GM12878 (cell line): ENCODE measurements at regions of chr18 and their contacts with region 1.

Region 1: GRCh38 chr18:50819728-50820378 is at the start of gene MRO:
- DNase-seq: no peak
- ATAC-seq: peak; percentile 99
- H3K4me3 ChIP-seq: peak within 1 kb of the TSS; percentile 56
- H3K27ac ChIP-seq: no peak within 1 kb of the TSS
- H3K4me1 ChIP-seq: peaks cover 6% of the 10 kb centered on the region; the same call in 1 of the 2 replicates
- H3K27me3 ChIP-seq: no peaks in the 10 kb centered on the region
- CTCF ChIP-seq: peak; percentile 95 to 97 (median 96)
- EP300 ChIP-seq: no peak
- POLR2A ChIP-seq: no peak
- RAD21 ChIP-seq: peak; percentile 97
- polyA plus RNA-seq, gene MRO: 0.11 TPM in 1 of 2 experiments, not detected in the other

Region 2: DNA sequence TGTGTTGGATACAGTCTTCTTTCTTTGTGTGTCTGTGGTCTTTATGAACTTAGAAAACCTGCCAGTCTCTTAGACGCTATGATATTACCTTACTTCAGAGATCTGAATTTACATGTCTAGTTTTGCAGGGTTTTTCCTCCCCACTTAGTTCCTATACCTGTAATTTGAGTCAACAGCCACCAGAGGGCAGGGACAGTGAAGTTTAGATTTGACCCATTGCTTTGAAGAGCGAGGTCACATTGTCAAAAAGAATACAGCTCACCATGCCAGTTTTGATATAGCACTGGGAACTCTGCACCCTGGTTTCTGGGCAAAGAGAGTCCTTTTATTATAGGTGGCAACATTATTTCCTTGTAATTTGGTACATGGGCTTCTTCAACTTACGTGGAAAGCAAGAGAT is 157.7 kb before region 1 on chr18:
- CTCF ChIA-PET with region 1: no interaction called
- POLR2A ChIA-PET with region 1: no interaction called
- RAD21 ChIA-PET with region 1: no interaction called
- SMC1A ChIA-PET with region 1: no interaction called
- in situ Hi-C with region 1: no loop called
- intact Hi-C with region 1: no loop called
- DNase-seq: no peak
- ATAC-seq: no peak
- H3K4me3 ChIP-seq: no peak overlapping the region
- H3K27ac ChIP-seq: no peak overlapping the region
- H3K4me1 ChIP-seq: no peaks in the 10 kb centered on the region
- H3K27me3 ChIP-seq: no peaks in the 10 kb centered on the region
- CTCF ChIP-seq: peak; percentile 18 to 50 (median 41); a peak in 3 of 6 replicates
- EP300 ChIP-seq: no peak
- POLR2A ChIP-seq: no peak
- RAD21 ChIP-seq: peak; percentile 56

Region 3: GRCh38 chr18:50866765-50867164 is 46.9 kb after region 1 on chr18:
- CTCF ChIA-PET with region 1: interaction called, 46 read pairs
- POLR2A ChIA-PET with region 1: no interaction called
- RAD21 ChIA-PET with region 1: interaction called, 20 read pairs
- SMC1A ChIA-PET with region 1: interaction called, 24 read pairs
- in situ Hi-C with region 1: no loop called
- intact Hi-C with region 1: loop called (anchors 2 kb)
- DNase-seq: no peak
- ATAC-seq: peak; percentile 73
- H3K4me3 ChIP-seq: no peak overlapping the region
- H3K27ac ChIP-seq: no peak overlapping the region
- H3K4me1 ChIP-seq: peaks cover 12% of the 10 kb centered on the region
- H3K27me3 ChIP-seq: no peaks in the 10 kb centered on the region
- CTCF ChIP-seq: peak; percentile 19 to 42 (median 32); a peak in 5 of 6 replicates
- EP300 ChIP-seq: no peak
- POLR2A ChIP-seq: no peak
- RAD21 ChIP-seq: peak; percentile 78

Region 4: GRCh38 chr18:50878345-50879301 is 58.8 kb after region 1 on chr18 and contains the start of gene ME2:
- CTCF ChIA-PET with region 1: interaction called, 6 read pairs
- POLR2A ChIA-PET with region 1: interaction called, 3 read pairs
- RAD21 ChIA-PET with region 1: interaction called, 3 read pairs
- SMC1A ChIA-PET with region 1: interaction called, 15 read pairs
- in situ Hi-C with region 1: no loop called
- intact Hi-C with region 1: loop called (anchors 1 kb)
- DNase-seq: peak; percentile 59
- ATAC-seq: peak; percentile 95
- H3K4me3 ChIP-seq: peak within 1 kb of the TSS; percentile 79
- H3K27ac ChIP-seq: peak within 1 kb of the TSS; percentile 99
- H3K4me1 ChIP-seq: peaks cover 15% of the 10 kb centered on the region
- H3K27me3 ChIP-seq: no peaks in the 10 kb centered on the region
- CTCF ChIP-seq: no peak
- EP300 ChIP-seq: no peak
- POLR2A ChIP-seq: peak; percentile 95
- RAD21 ChIP-seq: no peak
- polyA plus RNA-seq, gene ME2: 41.3 to 46.9 TPM

Region 5: DNA sequence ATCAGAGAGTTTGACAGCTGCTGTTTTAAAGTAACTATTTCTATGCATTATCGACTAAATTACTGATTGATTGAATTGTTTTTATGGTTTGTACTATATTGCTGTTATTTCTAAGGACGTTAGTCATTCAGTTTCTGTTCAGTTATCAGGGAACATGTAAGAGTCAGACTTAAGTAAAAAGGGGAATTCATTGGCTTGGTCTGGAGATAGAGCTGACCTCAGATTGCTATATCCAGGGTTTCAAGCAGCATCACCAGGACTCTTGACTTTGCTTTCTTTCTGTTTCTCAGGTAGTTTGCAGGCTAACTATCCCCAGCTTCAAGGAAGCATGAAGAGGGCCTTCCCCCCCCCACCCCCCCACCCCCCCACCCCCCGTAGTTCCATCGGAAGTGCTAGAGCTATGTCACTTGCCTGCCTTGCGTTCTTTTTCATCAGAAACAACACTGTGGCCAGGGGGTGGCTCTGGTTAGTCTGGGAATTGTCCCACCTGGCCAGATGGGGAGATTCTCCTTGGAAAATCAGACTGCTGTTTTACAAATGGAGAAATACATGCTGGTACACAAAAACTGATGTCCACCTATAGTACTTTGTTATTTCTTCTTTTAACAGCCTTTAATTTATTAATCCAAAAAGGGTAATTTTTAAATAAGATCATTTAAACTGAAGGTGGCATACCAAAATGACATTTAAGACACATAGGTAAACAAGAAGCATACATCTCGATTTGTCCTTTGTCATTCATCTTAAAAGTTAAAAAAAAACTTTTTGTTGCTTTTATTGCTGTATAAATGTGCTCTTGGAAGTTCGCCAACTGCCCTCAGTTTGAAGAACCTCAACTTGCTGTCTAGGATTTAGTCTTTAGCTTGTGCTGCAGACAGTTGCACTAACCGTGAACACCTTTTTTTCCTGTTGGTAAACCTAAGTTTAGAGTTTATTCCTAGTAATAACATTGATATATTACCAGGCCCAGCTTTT is 219.6 kb after region 1 on chr18:
- CTCF ChIA-PET with region 1: interaction called, 4 read pairs
- POLR2A ChIA-PET with region 1: interaction called, 5 read pairs
- RAD21 ChIA-PET with region 1: interaction called, 3 read pairs
- SMC1A ChIA-PET with region 1: interaction called, 6 read pairs
- in situ Hi-C with region 1: loop called (anchors 10 kb)
- intact Hi-C with region 1: no loop called
- DNase-seq: no peak
- ATAC-seq: peak; percentile 55
- H3K4me3 ChIP-seq: no peak overlapping the region
- H3K27ac ChIP-seq: no peak overlapping the region
- H3K4me1 ChIP-seq: peaks cover 2% of the 10 kb centered on the region
- H3K27me3 ChIP-seq: no peaks in the 10 kb centered on the region
- CTCF ChIP-seq: no peak
- EP300 ChIP-seq: no peak
- POLR2A ChIP-seq: no peak
- RAD21 ChIP-seq: no peak